ENCODE measurements at regions of chr3 and their contacts with region 1.

Region 1: DNA sequence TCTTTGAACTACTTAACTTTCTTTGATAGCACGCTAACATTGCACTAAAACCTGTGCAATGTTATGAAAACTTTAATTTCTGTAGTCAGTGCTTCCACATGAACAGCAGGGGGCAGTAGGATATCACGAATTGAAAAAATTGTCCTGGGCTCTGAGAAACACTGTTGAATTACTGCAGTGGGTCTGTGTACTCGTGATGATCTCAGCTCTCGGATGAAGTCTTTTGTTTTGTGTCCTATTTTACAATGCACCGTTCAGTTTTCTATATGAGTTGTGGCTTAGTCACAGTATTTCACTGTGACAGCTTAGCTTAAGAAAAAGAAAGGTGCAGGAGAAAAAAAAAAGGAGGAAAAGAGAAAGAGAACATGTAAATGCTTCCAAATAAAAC is 141.3 kb upstream of the CCDC54 start:
- DNase-seq: peak; percentile 64
- H3K4me3 ChIP-seq: peak overlapping the region; percentile 28 to 53 (median 50)
- H3K27ac ChIP-seq: peak overlapping the region; percentile 66 to 74 (median 68)
- H3K4me1 ChIP-seq: peaks cover 0 to 22% (median 8%) of the 10 kb centered on the region in 4 donors
- H3K27me3 ChIP-seq: no peaks in the 10 kb centered on the region
- CTCF ChIP-seq: peak; percentile 79 to 91 (median 83)
- EP300 ChIP-seq: no peak
- POLR2A ChIP-seq: no peak

Region 2: DNA sequence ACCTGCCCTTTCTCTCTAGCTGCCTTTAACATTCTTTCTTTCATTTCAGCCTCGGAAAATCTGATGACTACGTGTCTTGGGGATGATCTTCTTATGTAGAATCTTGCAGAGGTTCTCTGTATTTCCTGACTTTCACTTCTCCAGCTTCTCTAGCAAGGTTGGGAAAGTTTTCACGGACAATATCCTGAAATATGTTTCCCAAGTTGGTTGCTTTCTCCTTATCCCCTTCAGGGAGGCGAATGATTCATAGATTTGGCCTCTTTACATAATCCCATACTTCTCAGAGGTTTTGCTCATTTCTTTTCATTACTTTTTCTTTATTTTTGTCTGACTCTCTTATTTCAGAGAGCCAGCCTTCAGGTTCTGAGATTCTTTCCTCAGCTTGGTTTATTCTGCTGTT is 79.2 kb after region 1 on chr3:
- intact Hi-C with region 1: no loop called
- DNase-seq: no peak
- H3K4me3 ChIP-seq: no peak overlapping the region
- H3K27ac ChIP-seq: no peak overlapping the region
- H3K4me1 ChIP-seq: no peaks in the 10 kb centered on the region
- H3K27me3 ChIP-seq: no peaks in the 10 kb centered on the region
- CTCF ChIP-seq: no peak
- EP300 ChIP-seq: no peak
- POLR2A ChIP-seq: no peak

Region 3: GRCh38 chr3:107429320-107430181 is 193.6 kb after region 1 on chr3:
- intact Hi-C with region 1: loop called (anchors 2 kb)
- DNase-seq: peak; percentile 92
- H3K4me3 ChIP-seq: peak overlapping the region; percentile 73 to 92 (median 81)
- H3K27ac ChIP-seq: peak overlapping the region; percentile 94 to 98 (median 97)
- H3K4me1 ChIP-seq: peaks cover 0 to 11% (median 7%) of the 10 kb centered on the region in 4 donors
- H3K27me3 ChIP-seq: no peaks in the 10 kb centered on the region
- CTCF ChIP-seq: peak; percentile 56 to 92 (median 80)
- EP300 ChIP-seq: no peak
- POLR2A ChIP-seq: no peak

Region 4: GRCh38 chr3:107676469-107677309 is 440.8 kb after region 1 on chr3:
- intact Hi-C with region 1: loop called (anchors 5 kb)
- DNase-seq: no peak
- H3K4me3 ChIP-seq: no peak overlapping the region
- H3K27ac ChIP-seq: no peak overlapping the region
- H3K4me1 ChIP-seq: peaks cover 0 to 56% (median 36%) of the 10 kb centered on the region in 4 donors
- H3K27me3 ChIP-seq: no peaks in the 10 kb centered on the region
- CTCF ChIP-seq: peak in 3 of 4 experiments; percentile 28 to 54 (median 47)
- EP300 ChIP-seq: no peak
- POLR2A ChIP-seq: no peak

Region 5: DNA sequence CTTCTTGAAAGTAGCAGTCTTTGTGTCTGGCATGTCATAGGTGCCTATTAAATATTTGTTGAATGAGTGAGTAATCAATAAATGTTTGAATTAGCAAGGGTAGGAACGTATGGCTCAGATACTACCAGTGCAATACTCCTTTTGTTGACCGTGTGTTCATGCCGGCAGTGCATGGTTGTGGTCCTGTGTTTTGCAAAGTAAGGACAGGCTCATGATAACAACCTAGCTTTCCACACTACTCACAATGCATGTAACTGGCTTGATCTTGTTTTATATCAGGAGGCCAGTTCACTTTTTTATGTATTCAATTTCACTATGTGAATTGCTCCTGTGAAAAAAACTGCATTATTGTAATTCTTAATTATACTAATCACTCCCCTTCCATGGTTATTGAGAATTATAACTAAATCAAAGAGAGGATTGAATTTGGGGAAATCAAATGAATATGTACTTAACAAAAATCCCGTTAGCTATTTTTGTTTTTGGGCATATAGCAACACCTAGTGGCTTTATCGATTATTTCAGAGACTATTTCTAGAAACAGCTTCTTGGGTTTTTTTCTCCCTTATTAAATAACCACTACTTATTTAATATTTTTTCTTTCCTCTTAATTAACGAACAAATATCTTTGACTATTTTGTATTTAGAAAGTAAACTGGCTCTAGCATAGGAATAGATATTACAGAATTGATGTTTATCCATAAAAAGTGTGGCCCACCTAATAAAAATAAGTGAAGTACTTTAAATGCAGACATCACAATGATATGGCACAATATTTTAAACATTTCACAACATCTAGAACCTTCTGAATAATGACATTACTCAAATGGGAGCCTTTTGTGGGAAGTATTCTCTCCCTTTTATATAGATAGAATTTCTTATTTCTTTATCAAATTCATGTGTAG is 505.3 kb after region 1 on chr3:
- intact Hi-C with region 1: loop called (anchors 5 kb)
- DNase-seq: no peak
- H3K4me3 ChIP-seq: no peak overlapping the region
- H3K27ac ChIP-seq: no peak overlapping the region
- H3K4me1 ChIP-seq: no peaks in the 10 kb centered on the region
- H3K27me3 ChIP-seq: no peaks in the 10 kb centered on the region
- CTCF ChIP-seq: peak in 3 of 4 experiments; percentile 32 to 47 (median 34)
- EP300 ChIP-seq: no peak
- POLR2A ChIP-seq: no peak

Region 6: GRCh38 chr3:108221911-108222852 is 986.3 kb after region 1 on chr3 and contains the start of gene IFT57:
- intact Hi-C with region 1: loop called (anchors 10 kb)
- DNase-seq: peak; percentile 99
- H3K4me3 ChIP-seq: peak within 1 kb of the TSS; percentile 78 to 86 (median 82)
- H3K27ac ChIP-seq: peak within 1 kb of the TSS; percentile 80 to 84 (median 82)
- H3K4me1 ChIP-seq: peaks cover 0 to 33% (median 19%) of the 10 kb centered on the region in 4 donors
- H3K27me3 ChIP-seq: no peaks in the 10 kb centered on the region
- CTCF ChIP-seq: no peak
- EP300 ChIP-seq: no peak
- POLR2A ChIP-seq: peak; percentile 26 to 57
- total RNA-seq, gene IFT57: 38.8 to 49.6 (median 44.0) TPM

Region 7: DNA sequence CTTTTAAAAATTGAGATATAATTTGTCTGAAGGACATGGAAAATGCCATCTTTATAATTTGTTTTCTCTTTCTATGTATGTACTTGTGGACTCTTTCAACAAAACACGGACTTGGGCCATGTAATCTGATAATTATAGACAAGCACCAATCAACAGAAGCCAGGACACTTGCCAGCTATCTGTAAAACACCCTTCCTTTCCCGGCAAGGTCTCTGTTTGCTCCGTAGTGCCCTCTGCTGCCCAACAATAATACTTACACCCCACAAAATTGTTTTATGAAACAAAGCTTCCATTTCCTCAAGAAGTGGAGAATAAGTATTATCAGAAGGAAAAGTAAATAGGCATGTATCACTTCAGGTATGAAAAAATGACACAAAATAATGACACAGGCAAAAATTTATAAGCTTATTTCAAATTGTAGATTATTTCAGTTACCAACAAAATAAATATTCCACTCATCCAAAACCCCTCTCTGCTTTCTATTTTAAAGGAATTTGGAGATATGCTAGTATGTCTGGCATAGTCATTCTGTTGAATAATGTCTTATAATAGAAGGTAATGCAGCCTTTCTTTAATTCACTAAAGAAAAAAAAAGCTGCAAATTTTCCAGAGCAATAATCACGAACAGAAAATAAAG is 1241.7 kb after region 1 on chr3:
- intact Hi-C with region 1: loop called (anchors 5 kb)
- DNase-seq: no peak
- H3K4me3 ChIP-seq: no peak overlapping the region
- H3K27ac ChIP-seq: no peak overlapping the region
- H3K4me1 ChIP-seq: no peaks in the 10 kb centered on the region
- H3K27me3 ChIP-seq: no peaks in the 10 kb centered on the region
- CTCF ChIP-seq: peak; percentile 34 to 69 (median 43)
- EP300 ChIP-seq: no peak
- POLR2A ChIP-seq: no peak

Region 8: GRCh38 chr3:108552267-108553159 is 1316.6 kb after region 1 on chr3:
- intact Hi-C with region 1: loop called (anchors 5 kb)
- DNase-seq: no peak
- H3K4me3 ChIP-seq: no peak overlapping the region
- H3K27ac ChIP-seq: no peak overlapping the region
- H3K4me1 ChIP-seq: no peaks in the 10 kb centered on the region
- H3K27me3 ChIP-seq: no peaks in the 10 kb centered on the region
- CTCF ChIP-seq: peak in 3 of 4 experiments; percentile 14 to 42 (median 21)
- EP300 ChIP-seq: no peak
- POLR2A ChIP-seq: no peak

Measured in sigmoid colon (tissue), 7 donors.